ENCODE measurements at regions of chr2 and their contacts with region 1.

Region 1: DNA sequence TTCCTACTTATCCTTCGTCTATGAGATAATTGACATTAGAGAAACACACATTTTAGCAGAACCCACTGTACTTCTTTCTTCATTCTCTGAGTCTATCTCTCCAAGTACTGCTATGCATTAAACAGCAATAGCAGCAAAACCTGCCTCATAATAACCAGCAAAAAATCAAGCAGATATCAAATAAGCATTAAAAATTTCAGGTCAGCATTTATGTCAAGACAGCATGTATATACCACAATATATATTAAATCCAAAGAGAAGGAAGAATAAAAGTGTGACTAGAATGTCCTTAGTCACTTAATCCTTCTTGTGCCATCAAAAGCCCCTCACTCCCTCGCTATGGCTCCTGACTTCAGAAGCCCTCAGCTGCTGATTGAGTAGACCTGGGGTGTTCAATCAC is 131.3 kb downstream of the MGAT5 start:
- DNase-seq: no peak
- H3K4me3 ChIP-seq: no peak overlapping the region
- H3K27ac ChIP-seq: no peak overlapping the region
- H3K4me1 ChIP-seq: no peaks in the 10 kb centered on the region
- H3K27me3 ChIP-seq: no peaks in the 10 kb centered on the region
- CTCF ChIP-seq: no peak
- POLR2A ChIP-seq: no peak

Region 2: GRCh38 chr2:134261398-134262131 is 123.6 kb before region 1 on chr2:
- CTCF ChIA-PET with region 1: no interaction called
- POLR2A ChIA-PET with region 1: no interaction called
- dilution Hi-C with region 1: no loop called
- intact Hi-C with region 1: no loop called
- DNase-seq: peak; percentile 72
- H3K4me3 ChIP-seq: no peak overlapping the region
- H3K27ac ChIP-seq: peak overlapping the region; percentile 36
- H3K4me1 ChIP-seq: peaks cover 25% of the 10 kb centered on the region
- H3K27me3 ChIP-seq: no peaks in the 10 kb centered on the region
- CTCF ChIP-seq: no peak
- POLR2A ChIP-seq: no peak

Region 3: GRCh38 chr2:134368009-134368817 is 17.0 kb before region 1 on chr2:
- CTCF ChIA-PET with region 1: no interaction called
- POLR2A ChIA-PET with region 1: no interaction called
- dilution Hi-C with region 1: no loop called
- intact Hi-C with region 1: loop called (anchors 1 kb)
- DNase-seq: peak; percentile 14
- H3K4me3 ChIP-seq: no peak overlapping the region
- H3K27ac ChIP-seq: no peak overlapping the region
- H3K4me1 ChIP-seq: peaks cover 3% of the 10 kb centered on the region
- H3K27me3 ChIP-seq: no peaks in the 10 kb centered on the region
- CTCF ChIP-seq: no peak
- POLR2A ChIP-seq: no peak

Measured in endothelial cell of umbilical vein (primary cell).